ENCODE measurements at regions of chr2 and their contacts with region 1.

Region 1: GRCh38 chr2:231925303-231926179 is 655 bp downstream of the NPPC start:
- DNase-seq: peak; percentile 86 to 88
- ATAC-seq: peak; percentile 79 to 93
- H3K4me3 ChIP-seq: peak overlapping the region; percentile 47
- H3K27ac ChIP-seq: peak overlapping the region in 1 of 2 experiments; percentile 69; a peak in 3 of 6 replicates
- H3K4me1 ChIP-seq: peaks cover 4% of the 10 kb centered on the region; the same call in 1 of the 3 replicates
- CTCF ChIP-seq: peak; percentile 94
- EP300 ChIP-seq: no peak
- POLR2A ChIP-seq: no peak
- RAD21 ChIP-seq: peak; percentile 65 to 86

Region 2: DNA sequence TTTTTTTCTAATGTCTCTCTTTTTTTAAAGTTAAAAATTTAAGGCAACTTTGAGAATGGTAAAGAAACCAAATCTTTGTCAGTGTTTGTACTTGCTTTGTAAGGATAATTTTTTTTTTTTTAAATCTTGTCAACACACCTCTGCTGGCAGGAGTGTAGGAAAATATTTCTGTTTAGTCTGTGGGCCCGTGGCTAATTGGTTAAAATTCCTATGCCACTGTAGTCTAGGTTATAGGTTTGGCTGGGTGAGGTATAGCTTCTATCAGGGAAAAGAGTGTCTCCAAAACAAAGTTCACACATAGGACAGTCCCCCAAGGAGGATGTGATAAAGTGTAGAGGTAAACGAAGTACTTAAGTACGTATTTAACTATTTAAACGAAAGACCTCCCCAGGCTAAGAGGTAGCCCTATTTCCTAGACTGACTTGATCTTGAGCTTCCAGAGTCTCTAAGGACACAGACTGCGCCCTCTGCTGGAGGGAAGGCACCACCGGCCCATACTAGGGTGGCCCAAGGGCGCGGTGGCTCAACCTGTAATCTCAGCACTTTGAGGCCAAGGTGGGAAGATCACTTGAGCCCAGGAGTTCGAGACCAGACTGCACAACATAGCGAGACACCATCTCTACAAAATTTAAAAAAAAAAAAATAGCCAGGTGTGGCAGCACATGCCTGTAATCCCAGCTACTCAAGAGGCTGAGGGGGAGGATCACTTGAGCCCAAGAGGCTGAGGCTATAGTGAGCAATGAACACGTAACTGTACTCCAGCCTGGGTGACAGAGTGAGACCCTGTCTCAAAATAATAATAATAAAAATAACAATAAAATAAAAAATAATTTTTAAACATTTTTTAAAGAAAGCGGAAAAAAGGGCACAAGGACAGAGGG is 324.0 kb before region 1 on chr2:
- CTCF ChIA-PET with region 1: no interaction called
- POLR2A ChIA-PET with region 1: no interaction called
- DNase-seq: peak; percentile 84 to 91
- ATAC-seq: peak; percentile 55 to 71; a peak in 4 of 6 replicates
- H3K4me3 ChIP-seq: no peak overlapping the region
- H3K27ac ChIP-seq: no peak overlapping the region
- H3K4me1 ChIP-seq: peaks cover 34% of the 10 kb centered on the region
- CTCF ChIP-seq: peak; percentile 81
- EP300 ChIP-seq: no peak
- POLR2A ChIP-seq: no peak
- RAD21 ChIP-seq: peak; percentile 59 to 60

Region 3: DNA sequence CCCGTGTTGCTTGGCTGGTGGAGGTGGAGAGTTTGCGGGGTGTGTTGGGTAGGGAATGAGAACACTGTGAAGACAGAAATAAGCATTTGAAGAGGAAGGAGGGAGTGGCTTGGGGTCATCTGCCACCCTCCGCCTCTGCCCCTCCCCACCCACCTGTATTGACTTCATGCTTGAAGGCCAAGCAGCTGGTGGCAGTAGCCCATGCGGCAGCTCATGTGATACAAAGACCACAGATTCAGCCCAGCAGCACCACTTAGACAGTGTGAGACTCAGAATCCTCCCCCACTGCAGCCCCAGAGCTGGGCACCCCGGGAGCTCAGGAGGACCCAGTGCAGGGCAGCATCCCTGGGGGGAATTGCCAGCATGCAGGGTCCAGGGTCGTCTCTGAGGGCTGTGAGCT is 14.8 kb before region 1 on chr2:
- CTCF ChIA-PET with region 1: interaction called, 74 read pairs
- POLR2A ChIA-PET with region 1: no interaction called
- DNase-seq: no peak
- ATAC-seq: no peak
- H3K4me3 ChIP-seq: no peak overlapping the region
- H3K27ac ChIP-seq: no peak overlapping the region
- H3K4me1 ChIP-seq: peaks cover 3% of the 10 kb centered on the region; the same call in 1 of the 3 replicates
- CTCF ChIP-seq: no peak
- EP300 ChIP-seq: no peak
- POLR2A ChIP-seq: no peak
- RAD21 ChIP-seq: no peak

Region 4: GRCh38 chr2:232261776-232262175 is 336.2 kb after region 1 on chr2:
- CTCF ChIA-PET with region 1: interaction called, 10 read pairs
- POLR2A ChIA-PET with region 1: no interaction called
- DNase-seq: no peak
- ATAC-seq: no peak
- H3K4me3 ChIP-seq: no peak overlapping the region
- H3K27ac ChIP-seq: no peak overlapping the region
- H3K4me1 ChIP-seq: no peaks in the 10 kb centered on the region
- CTCF ChIP-seq: no peak
- EP300 ChIP-seq: no peak
- POLR2A ChIP-seq: no peak
- RAD21 ChIP-seq: no peak

Region 5: DNA sequence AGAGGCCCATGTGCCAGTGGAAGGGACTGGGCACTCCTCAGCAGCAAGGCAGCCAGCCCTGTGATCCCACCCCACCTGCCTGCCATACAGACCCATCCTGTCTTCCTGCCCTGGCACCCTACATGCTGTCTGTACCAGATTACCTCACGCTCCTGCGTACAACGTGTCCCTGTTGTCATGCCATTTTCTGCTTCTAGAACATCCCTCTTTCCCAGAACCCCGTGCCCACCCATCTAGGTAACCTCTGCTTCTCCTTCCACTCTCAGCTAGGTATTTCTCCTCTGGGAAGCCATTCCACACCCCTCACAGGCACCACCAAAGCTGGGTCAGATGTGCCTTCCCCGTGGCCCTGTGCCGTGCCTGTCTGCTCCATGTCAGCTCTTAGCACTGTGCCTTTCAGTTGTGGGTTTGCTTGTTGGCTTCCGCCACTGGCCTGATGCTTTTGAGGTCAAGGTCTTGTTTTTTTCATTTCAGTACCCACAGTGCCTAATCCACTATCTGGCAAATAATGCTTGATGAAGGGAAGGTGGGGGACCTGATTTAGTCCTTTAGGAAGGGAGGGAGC is 381.3 kb after region 1 on chr2:
- CTCF ChIA-PET with region 1: interaction called, 13 read pairs
- POLR2A ChIA-PET with region 1: no interaction called
- DNase-seq: no peak
- ATAC-seq: no peak
- H3K4me3 ChIP-seq: no peak overlapping the region
- H3K27ac ChIP-seq: no peak overlapping the region
- H3K4me1 ChIP-seq: peaks cover 2% of the 10 kb centered on the region
- CTCF ChIP-seq: no peak
- EP300 ChIP-seq: no peak
- POLR2A ChIP-seq: no peak
- RAD21 ChIP-seq: no peak

Region 6: GRCh38 chr2:232327105-232328041 is 401.8 kb after region 1 on chr2:
- CTCF ChIA-PET with region 1: interaction called, 154 read pairs
- POLR2A ChIA-PET with region 1: no interaction called
- DNase-seq: peak; percentile 49 to 75
- ATAC-seq: peak; percentile 63 to 92
- H3K4me3 ChIP-seq: no peak overlapping the region
- H3K27ac ChIP-seq: no peak overlapping the region
- H3K4me1 ChIP-seq: no peaks in the 10 kb centered on the region
- CTCF ChIP-seq: peak; percentile 72
- EP300 ChIP-seq: no peak
- POLR2A ChIP-seq: no peak
- RAD21 ChIP-seq: peak; percentile 73 to 79

Region 7: DNA sequence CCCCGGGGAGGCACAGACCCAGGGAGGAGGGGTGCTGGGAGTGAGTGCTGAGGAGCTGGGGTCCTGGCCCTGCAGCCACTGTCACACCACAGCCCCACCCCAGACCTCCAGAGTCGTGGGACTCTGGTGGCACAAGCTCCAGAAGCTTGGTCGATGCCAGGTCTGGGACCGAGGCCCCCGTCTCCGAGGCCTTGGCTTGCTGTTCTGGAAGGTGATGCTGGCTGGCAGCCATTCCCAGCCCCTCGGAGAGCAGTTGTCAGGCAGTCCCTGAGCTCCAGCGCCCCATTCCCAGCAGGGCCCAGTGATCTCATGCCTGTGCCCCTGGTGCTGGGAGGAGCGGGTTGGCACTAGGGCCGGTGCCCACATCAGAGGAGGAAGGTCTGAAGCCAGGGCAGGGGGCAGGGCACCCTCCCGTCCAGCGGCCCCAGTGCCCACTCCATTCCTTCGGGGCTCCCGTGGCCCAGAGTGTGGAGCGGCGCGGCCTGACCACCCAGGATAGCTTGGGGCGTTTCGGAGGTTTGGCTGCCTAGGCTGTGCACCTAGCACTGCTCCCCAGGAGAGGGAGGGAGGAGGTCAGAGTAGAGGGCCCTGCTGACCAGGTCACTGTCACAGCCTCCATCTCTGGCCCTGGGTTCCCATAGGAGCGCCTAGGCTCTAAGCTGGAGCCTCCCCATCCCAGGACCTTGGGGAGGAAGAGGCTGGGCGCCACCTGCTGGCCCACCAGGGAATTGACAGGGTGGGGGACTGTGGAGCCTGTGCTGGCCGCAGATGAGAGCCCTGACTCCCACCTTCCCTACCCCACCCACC is 513.6 kb after region 1 on chr2:
- CTCF ChIA-PET with region 1: interaction called, 13 read pairs
- POLR2A ChIA-PET with region 1: no interaction called
- DNase-seq: peak in 1 of 2 experiments; percentile 44
- ATAC-seq: peak; percentile 65 to 84
- H3K4me3 ChIP-seq: no peak overlapping the region
- H3K27ac ChIP-seq: no peak overlapping the region
- H3K4me1 ChIP-seq: peaks cover 11% of the 10 kb centered on the region
- CTCF ChIP-seq: peak; percentile 63
- EP300 ChIP-seq: no peak
- POLR2A ChIP-seq: no peak
- RAD21 ChIP-seq: peak; percentile 58 to 67